ENCODE measurements at regions of chr19 and their contacts with region 1.

Region 1: DNA sequence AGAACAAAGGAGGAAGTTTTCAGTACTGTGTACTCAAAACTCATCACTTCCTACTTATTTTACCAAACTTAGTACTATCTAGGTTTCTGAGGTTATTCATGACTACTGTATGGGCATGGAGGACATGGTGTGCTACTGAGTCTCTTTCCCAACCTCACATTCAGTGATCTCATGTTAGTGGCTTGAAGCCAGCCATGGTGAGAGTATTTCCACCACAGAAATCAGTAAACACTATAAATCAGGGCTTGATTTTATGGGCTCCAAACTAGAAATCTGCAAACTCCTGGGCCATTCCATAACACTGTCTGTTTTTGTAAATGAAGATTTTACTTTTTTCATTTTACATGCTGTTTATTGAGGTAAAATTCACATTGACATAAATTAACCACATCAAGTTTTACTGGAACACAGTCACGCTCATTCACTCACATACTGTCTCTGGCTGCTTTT is 19.7 kb downstream of the MED26 start:
- DNase-seq: no peak
- H3K4me3 Mint-ChIP-seq: no peak overlapping the region
- H3K27ac Mint-ChIP-seq: no peak overlapping the region
- H3K4me1 Mint-ChIP-seq: peaks cover 24% of the 10 kb centered on the region
- H3K27me3 Mint-ChIP-seq: no peaks in the 10 kb centered on the region

Region 2: GRCh38 chr19:16594131-16594586 is 14.2 kb before region 1 on chr19:
- intact Hi-C with region 1: loop called (anchors 1 kb)
- DNase-seq: peak; percentile 49
- H3K4me3 Mint-ChIP-seq: peak overlapping the region; percentile 66
- H3K27ac Mint-ChIP-seq: peak overlapping the region; percentile 85
- H3K4me1 Mint-ChIP-seq: peaks cover 54% of the 10 kb centered on the region
- H3K27me3 Mint-ChIP-seq: no peaks in the 10 kb centered on the region